ENCODE measurements at regions of chr3 and their contacts with region 1.

Region 1: DNA sequence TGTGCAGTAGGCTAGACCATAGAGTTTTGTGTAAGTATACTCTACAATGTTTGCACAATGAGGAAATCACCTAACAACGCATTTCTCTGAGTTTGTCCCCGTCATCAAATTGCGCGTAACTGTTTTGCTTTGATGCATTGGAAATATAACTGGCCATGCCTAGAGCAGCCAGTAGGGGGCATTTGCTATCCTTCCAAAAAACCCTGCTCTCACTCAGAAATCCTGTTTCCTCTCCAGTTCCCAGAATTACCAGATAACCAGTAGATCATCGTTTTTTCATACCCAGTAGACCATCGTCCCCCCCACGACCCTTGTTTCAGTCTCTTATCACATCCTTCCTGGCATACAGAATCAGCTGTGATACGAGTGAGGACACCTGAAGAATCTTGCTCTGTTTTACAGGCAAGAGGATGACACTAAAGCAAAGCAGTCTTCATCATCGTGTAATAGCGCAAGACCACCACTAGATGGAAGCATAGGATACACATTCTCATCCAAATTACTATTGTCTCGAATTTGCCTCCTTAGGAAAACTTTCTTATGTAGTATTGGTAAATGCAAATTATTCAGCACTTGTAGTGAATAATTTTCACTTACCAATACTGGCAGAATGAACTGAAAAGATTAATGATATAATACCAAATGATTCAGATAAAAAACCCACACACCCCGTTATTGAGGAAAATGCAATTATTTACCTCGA is 4.4 kb upstream of the GABRR3 start:
- DNase-seq: peak; percentile 84 to 90 (median 89)
- H3K4me3 ChIP-seq: peak overlapping the region; percentile 57 to 58
- H3K4me3 Mint-ChIP-seq: peak overlapping the region; percentile 85 to 96 (median 88)
- H3K27ac ChIP-seq: peak overlapping the region; percentile 68
- H3K27ac Mint-ChIP-seq: peak overlapping the region; percentile 82 to 98 (median 96)
- H3K4me1 ChIP-seq: no peaks in the 10 kb centered on the region
- H3K4me1 Mint-ChIP-seq: peaks cover 2 to 8% (median 5%) of the 10 kb centered on the region in 4 donors
- H3K27me3 ChIP-seq: peaks cover 3% of the 10 kb centered on the region
- H3K27me3 Mint-ChIP-seq: peaks cover 7 to 10% of the 10 kb centered on the region in 2 donors

Region 2: GRCh38 chr3:98329392-98330124 is 290.1 kb after region 1 on chr3:
- CTCF ChIA-PET with region 1: interaction called, 43 read pairs
- POLR2A ChIA-PET with region 1: interaction called, 3 read pairs
- intact Hi-C with region 1: loop called (anchors 1 kb)
- DNase-seq: peak; percentile 38 to 56 (median 51)
- H3K4me3 ChIP-seq: no peak overlapping the region
- H3K4me3 Mint-ChIP-seq: peak overlapping the region in 1 of 8 donors; percentile 0
- H3K27ac ChIP-seq: no peak overlapping the region
- H3K27ac Mint-ChIP-seq: peak overlapping the region in 1 of 7 donors; percentile 6
- H3K4me1 ChIP-seq: no peaks in the 10 kb centered on the region
- H3K4me1 Mint-ChIP-seq: peaks cover 0 to 4% (median 2%) of the 10 kb centered on the region in 4 donors
- H3K27me3 ChIP-seq: no peaks in the 10 kb centered on the region
- H3K27me3 Mint-ChIP-seq: peaks cover 12 to 13% of the 10 kb centered on the region in 2 donors

Region 3: GRCh38 chr3:98563661-98564281 is 524.3 kb after region 1 on chr3:
- CTCF ChIA-PET with region 1: no interaction called
- POLR2A ChIA-PET with region 1: interaction called, 3 read pairs
- intact Hi-C with region 1: loop called (anchors 1 kb)
- DNase-seq: peak; percentile 66 to 86 (median 80)
- H3K4me3 ChIP-seq: no peak overlapping the region
- H3K4me3 Mint-ChIP-seq: peak overlapping the region; percentile 45 to 87 (median 82)
- H3K27ac ChIP-seq: peak overlapping the region; percentile 92
- H3K27ac Mint-ChIP-seq: peak overlapping the region; percentile 91 to 99 (median 98)
- H3K4me1 ChIP-seq: peaks cover 86% of the 10 kb centered on the region
- H3K4me1 Mint-ChIP-seq: peaks cover 55 to 87% (median 75%) of the 10 kb centered on the region in 4 donors
- H3K27me3 ChIP-seq: no peaks in the 10 kb centered on the region
- H3K27me3 Mint-ChIP-seq: no peaks in the 10 kb centered on the region

Region 4: DNA sequence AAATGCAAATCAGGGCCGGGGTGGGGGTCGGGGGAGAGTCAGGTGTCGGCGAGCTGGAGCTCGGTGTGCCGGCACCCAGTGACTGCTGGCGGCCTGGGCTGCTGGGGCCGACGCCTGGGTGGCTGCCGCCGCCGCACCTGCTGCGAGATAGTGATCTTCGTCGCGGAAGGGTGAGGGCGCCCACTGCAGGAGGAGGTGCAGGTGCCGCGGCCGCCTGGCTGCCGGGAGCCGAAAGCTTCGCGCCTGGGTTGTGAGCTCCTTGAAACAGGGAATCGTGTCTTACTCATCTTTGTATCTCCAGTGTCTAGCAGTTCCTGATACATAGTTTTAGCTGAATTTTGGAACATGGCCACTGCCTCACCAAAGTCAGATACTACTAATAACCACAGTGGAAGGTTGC is 618.0 kb after region 1 on chr3:
- CTCF ChIA-PET with region 1: interaction called, 3 read pairs
- POLR2A ChIA-PET with region 1: no interaction called
- intact Hi-C with region 1: loop called (anchors 1 kb)
- DNase-seq: peak in 4 of 5 donors; percentile 16 to 32 (median 20)
- H3K4me3 ChIP-seq: no peak overlapping the region
- H3K4me3 Mint-ChIP-seq: peak overlapping the region in 1 of 8 donors; percentile 14
- H3K27ac ChIP-seq: no peak overlapping the region
- H3K27ac Mint-ChIP-seq: no peak overlapping the region
- H3K4me1 ChIP-seq: no peaks in the 10 kb centered on the region
- H3K4me1 Mint-ChIP-seq: peaks cover 0 to 7% (median 4%) of the 10 kb centered on the region in 4 donors
- H3K27me3 ChIP-seq: no peaks in the 10 kb centered on the region
- H3K27me3 Mint-ChIP-seq: peaks cover 14 to 16% of the 10 kb centered on the region in 2 donors

Region 5: GRCh38 chr3:98901392-98902350 is 862.2 kb after region 1 on chr3 and contains the start of gene DCBLD2:
- CTCF ChIA-PET with region 1: no interaction called
- POLR2A ChIA-PET with region 1: no interaction called
- intact Hi-C with region 1: loop called (anchors 5 kb)
- DNase-seq: peak; percentile 88 to 94 (median 91)
- H3K4me3 ChIP-seq: peak within 1 kb of the TSS; percentile 53 to 75
- H3K4me3 Mint-ChIP-seq: peak within 1 kb of the TSS; percentile 87 to 96 (median 93)
- H3K27ac ChIP-seq: peak within 1 kb of the TSS; percentile 12
- H3K27ac Mint-ChIP-seq: peak within 1 kb of the TSS; percentile 64 to 92 (median 82)
- H3K4me1 ChIP-seq: peaks cover 8% of the 10 kb centered on the region
- H3K4me1 Mint-ChIP-seq: peaks cover 8 to 28% (median 12%) of the 10 kb centered on the region in 4 donors
- H3K27me3 ChIP-seq: peaks cover 8% of the 10 kb centered on the region
- H3K27me3 Mint-ChIP-seq: peaks cover 4 to 25% of the 10 kb centered on the region in 2 donors
- total RNA-seq, gene DCBLD2: 1.7 to 2.5 TPM

Measured in CD4-positive, alpha-beta memory T cell (primary cell).